H1 (cell line): ENCODE measurements at regions of chr5 and their contacts with region 1.

Region 1: GRCh38 chr5:337563-338130 is 16.1 kb downstream of the AHRR start:
- DNase-seq: no peak
- H3K4me3 ChIP-seq: no peak overlapping the region
- H3K27ac ChIP-seq: no peak overlapping the region
- H3K4me1 ChIP-seq: no peaks in the 10 kb centered on the region; a peak in 1 of 7 replicates
- H3K27me3 ChIP-seq: peaks cover 0 to 2% (median 2%) of the 10 kb centered on the region in 4 experiments; a peak in 6 of 7 replicates
- CTCF ChIP-seq: peak; percentile 19 to 68 (median 54)
- EP300 ChIP-seq: no peak
- POLR2A ChIP-seq: no peak
- RAD21 ChIP-seq: peak; percentile 32 to 56; a peak in 3 of 4 replicates

Region 2: DNA sequence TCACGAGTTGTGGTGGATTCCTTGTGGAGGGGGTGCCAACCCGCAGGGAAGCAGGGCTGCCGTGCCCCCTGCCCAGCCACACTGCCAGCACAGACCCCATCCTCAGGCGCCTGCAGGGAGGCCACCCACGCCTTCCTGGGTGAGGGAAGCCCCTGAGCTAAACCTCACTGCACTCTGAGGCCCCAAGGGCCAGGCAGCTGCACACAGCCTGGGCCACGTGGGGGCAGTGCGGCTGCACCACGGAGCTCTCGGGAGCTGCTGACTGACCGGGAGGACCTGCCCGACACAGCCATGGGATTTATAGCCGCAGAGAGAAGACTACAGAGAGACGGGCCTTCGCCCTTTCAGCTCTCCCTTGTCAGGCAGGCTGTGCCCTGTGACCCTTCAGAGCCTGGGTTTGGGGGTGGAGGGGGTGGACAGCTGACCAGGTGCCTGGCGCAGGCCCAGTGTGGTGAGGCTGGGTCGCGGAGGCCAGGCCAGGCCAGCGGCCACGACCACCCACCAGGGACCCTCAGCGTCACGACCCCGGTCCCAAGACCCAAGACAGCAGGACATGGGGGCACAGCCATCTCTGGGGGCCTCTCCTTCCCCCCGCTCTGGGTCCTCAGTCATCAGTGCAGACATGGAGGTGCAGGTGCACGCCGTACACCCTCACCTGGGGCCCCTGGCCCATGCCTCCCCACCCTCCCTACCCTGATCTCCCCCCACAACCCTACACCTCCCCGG is 20.4 kb before region 1 on chr5:
- CTCF ChIA-PET with region 1: interaction called, 16 read pairs
- POLR2A ChIA-PET with region 1: interaction called, 4 read pairs
- DNase-seq: peak; percentile 50 to 86
- H3K4me3 ChIP-seq: no peak overlapping the region
- H3K27ac ChIP-seq: no peak overlapping the region
- H3K4me1 ChIP-seq: peaks cover 0 to 19% (median under 1%) of the 10 kb centered on the region in 4 experiments; a peak in 5 of 7 replicates
- H3K27me3 ChIP-seq: peaks cover 28 to 38% (median 35%) of the 10 kb centered on the region in 4 experiments
- CTCF ChIP-seq: peak in 2 of 3 experiments; percentile 92; a peak in 3 of 4 replicates
- EP300 ChIP-seq: no peak; a peak in 1 of 3 replicates
- POLR2A ChIP-seq: no peak
- RAD21 ChIP-seq: peak; percentile 95 to 97

Region 3: DNA sequence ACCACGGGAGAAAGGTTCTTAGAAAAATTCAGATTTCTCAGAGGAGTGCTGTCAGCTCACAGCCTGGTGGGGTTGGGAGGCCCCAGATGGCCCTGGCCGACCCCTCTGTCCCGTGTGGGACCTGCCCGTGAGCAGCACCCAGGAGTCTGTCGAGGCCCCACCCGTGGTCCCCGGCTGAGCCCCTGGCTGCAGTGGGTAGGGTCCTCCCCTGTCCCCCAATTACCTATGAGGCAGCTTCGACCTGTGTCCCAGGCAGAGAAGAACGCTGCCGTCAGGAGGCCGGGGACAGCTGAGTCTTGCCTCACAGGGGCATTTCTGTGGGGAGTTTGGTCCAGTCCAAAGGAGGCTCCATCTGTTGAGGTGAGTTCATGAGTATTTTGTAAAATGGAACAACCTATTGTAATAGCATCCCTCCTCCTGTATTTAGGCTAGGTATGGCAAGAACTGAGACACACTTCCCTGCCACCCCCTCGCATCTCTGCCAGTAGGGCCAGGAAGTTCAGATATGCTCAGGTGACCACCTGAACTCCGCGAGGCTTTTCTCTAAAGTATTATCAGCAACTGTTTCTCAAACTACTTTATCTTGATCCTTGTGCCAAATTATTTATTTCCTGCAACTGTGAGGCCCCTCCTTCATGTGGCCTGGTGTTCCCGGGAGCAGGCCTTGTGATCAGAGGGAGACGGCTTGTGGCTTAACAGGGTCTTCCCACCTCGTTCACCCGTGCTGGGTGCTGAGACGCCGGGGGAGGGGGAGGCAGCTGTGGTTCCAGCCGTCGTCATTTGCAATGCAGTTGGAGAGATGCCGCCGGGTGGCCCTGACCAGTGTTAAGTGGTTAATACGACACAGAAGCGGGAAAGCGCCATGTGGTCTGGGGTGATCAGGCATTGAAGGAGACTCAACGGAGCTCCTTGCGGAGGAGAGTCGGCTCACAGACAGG is 14.4 kb before region 1 on chr5:
- CTCF ChIA-PET with region 1: interaction called, 12 read pairs
- POLR2A ChIA-PET with region 1: interaction called, 4 read pairs
- DNase-seq: peak in 1 of 2 experiments; percentile 52
- H3K4me3 ChIP-seq: peak overlapping the region in 1 of 4 experiments; percentile 93; a peak in 1 of 8 replicates
- H3K27ac ChIP-seq: no peak overlapping the region
- H3K4me1 ChIP-seq: peaks cover 0 to 14% (median 3%) of the 10 kb centered on the region in 4 experiments; a peak in 4 of 7 replicates
- H3K27me3 ChIP-seq: peaks cover 38 to 53% (median 52%) of the 10 kb centered on the region in 4 experiments
- CTCF ChIP-seq: no peak
- EP300 ChIP-seq: no peak
- POLR2A ChIP-seq: no peak
- RAD21 ChIP-seq: no peak